Body of pancreas (tissue), 4 donors: ENCODE measurements at regions of chr16 and their contacts with region 1.

Region 1: GRCh38 chr16:51151961-51152663 is 1.0 kb upstream of the SALL1 start:
- DNase-seq: peak; percentile 22 to 59 (median 40)
- ATAC-seq: peak; percentile 74
- H3K4me3 ChIP-seq: peak overlapping the region in 1 of 2 donors; percentile 22
- H3K27ac ChIP-seq: peak overlapping the region in 2 of 4 donors; percentile 18 to 53
- H3K4me1 ChIP-seq: peaks cover 42% of the 10 kb centered on the region
- H3K27me3 ChIP-seq: peaks cover 4 to 58% of the 10 kb centered on the region in 2 donors
- CTCF ChIP-seq: no peak
- POLR2A ChIP-seq: no peak

Region 2: DNA sequence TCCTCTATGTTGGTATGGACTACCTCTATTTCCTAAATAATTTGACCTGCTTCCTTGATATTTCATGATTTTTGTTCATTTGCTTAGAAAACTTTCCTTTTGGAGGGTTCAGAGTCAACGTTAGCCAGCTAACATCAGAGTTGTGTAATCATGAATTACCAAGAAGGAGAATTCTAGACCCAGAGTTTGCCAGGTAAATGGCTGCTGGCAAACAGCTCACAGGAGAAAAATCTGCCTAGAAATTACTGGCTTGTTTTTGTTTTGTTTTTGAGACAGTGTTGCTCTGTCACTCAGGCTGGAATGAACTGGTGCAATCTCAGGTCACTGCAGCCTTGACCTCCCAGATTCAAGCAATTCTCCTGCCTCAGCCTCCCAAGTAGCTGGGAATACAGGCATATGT is 110.3 kb after region 1 on chr16:
- intact Hi-C with region 1: no loop called
- DNase-seq: no peak
- ATAC-seq: no peak
- H3K4me3 ChIP-seq: no peak overlapping the region
- H3K27ac ChIP-seq: no peak overlapping the region
- H3K4me1 ChIP-seq: no peaks in the 10 kb centered on the region
- H3K27me3 ChIP-seq: no peaks in the 10 kb centered on the region
- CTCF ChIP-seq: no peak
- POLR2A ChIP-seq: no peak

Region 3: GRCh38 chr16:51388516-51388951 is 236.4 kb after region 1 on chr16:
- intact Hi-C with region 1: loop called (anchors 10 kb)
- DNase-seq: no peak
- ATAC-seq: no peak
- H3K4me3 ChIP-seq: no peak overlapping the region
- H3K27ac ChIP-seq: no peak overlapping the region
- H3K4me1 ChIP-seq: no peaks in the 10 kb centered on the region
- H3K27me3 ChIP-seq: no peaks in the 10 kb centered on the region
- CTCF ChIP-seq: no peak
- POLR2A ChIP-seq: no peak